Transverse colon (tissue), 4 donors: ENCODE measurements at regions of chr3 and their contacts with region 1.

Region 1: DNA sequence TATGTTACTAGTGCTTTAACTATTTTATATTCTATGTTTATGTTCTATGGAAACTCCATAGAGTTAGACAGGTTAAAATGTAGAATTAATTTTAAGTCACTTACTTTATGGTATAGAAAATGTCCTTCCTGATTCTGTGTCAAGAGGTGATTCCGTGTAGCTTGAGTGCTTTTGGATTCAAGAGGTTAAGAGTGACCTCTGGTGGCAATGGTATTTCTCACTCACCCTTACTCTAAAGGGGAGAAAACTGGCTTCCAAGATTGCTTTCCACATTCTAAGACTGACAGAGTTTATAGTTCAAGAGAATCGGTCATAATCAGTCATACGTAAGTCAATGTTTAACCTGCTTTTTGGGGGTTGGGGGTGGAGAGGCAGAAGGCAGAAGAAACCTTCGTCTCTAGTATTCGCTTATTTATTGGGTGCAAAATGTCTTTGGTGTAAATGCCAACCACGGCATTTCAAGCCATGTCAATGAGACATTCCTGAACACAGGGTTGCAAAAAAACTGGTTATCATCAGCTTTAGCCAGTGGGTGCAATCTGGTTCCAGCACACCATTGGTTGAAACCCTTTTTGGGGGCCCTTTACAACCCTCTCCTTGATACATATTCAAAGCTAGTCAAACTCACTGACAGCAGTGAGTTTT is 92.0 kb upstream of the VGLL3 start:
- DNase-seq: no peak
- H3K4me3 ChIP-seq: no peak overlapping the region
- H3K27ac ChIP-seq: no peak overlapping the region
- H3K4me1 ChIP-seq: no peaks in the 10 kb centered on the region
- H3K27me3 ChIP-seq: no peaks in the 10 kb centered on the region
- CTCF ChIP-seq: peak; percentile 18 to 48 (median 39)
- EP300 ChIP-seq: no peak
- POLR2A ChIP-seq: no peak

Region 2: GRCh38 chr3:86774082-86774691 is 308.7 kb before region 1 on chr3:
- in situ Hi-C with region 1: loop called in 3 of 4 experiments (anchors 25 kb)
- intact Hi-C with region 1: loop called (anchors 10 kb)
- DNase-seq: no peak
- H3K4me3 ChIP-seq: no peak overlapping the region
- H3K27ac ChIP-seq: no peak overlapping the region
- H3K4me1 ChIP-seq: no peaks in the 10 kb centered on the region
- H3K27me3 ChIP-seq: no peaks in the 10 kb centered on the region
- CTCF ChIP-seq: peak; percentile 31 to 47 (median 40)
- EP300 ChIP-seq: no peak
- POLR2A ChIP-seq: no peak

Region 3: DNA sequence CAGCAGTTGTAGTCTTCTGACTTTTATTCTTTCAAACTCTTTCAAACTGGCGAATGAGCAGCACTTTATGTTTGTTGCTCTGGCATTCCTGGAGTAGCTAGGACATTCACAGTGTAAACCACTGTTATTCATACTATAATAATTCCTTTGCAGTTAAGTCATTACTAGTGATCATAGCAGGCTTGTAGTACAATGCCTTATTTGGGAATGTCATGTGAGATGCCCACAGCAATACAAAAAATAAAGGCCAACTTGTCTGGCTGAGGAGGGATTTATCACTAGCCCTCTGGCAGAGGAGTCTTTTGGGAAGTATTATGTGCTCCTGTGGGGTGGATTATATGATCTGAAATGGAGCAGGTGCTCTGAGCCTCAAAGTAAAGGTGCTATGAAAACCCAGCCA is 289.1 kb before region 1 on chr3:
- in situ Hi-C with region 1: loop called in 3 of 4 experiments (anchors 25 kb)
- intact Hi-C with region 1: no loop called
- DNase-seq: no peak
- H3K4me3 ChIP-seq: no peak overlapping the region
- H3K27ac ChIP-seq: peak overlapping the region; percentile 23 to 77 (median 74)
- H3K4me1 ChIP-seq: peaks cover 0 to 10% (median 5%) of the 10 kb centered on the region in 4 donors
- H3K27me3 ChIP-seq: no peaks in the 10 kb centered on the region
- CTCF ChIP-seq: no peak
- EP300 ChIP-seq: no peak
- POLR2A ChIP-seq: no peak

Region 4: GRCh38 chr3:86969500-86970189 is 113.3 kb before region 1 on chr3:
- in situ Hi-C with region 1: loop called in 1 of 4 experiments (anchors 10 kb)
- intact Hi-C with region 1: no loop called
- DNase-seq: no peak
- H3K4me3 ChIP-seq: no peak overlapping the region
- H3K27ac ChIP-seq: no peak overlapping the region
- H3K4me1 ChIP-seq: no peaks in the 10 kb centered on the region
- H3K27me3 ChIP-seq: no peaks in the 10 kb centered on the region
- CTCF ChIP-seq: peak; percentile 37 to 61 (median 55)
- EP300 ChIP-seq: no peak
- POLR2A ChIP-seq: no peak

Region 5: DNA sequence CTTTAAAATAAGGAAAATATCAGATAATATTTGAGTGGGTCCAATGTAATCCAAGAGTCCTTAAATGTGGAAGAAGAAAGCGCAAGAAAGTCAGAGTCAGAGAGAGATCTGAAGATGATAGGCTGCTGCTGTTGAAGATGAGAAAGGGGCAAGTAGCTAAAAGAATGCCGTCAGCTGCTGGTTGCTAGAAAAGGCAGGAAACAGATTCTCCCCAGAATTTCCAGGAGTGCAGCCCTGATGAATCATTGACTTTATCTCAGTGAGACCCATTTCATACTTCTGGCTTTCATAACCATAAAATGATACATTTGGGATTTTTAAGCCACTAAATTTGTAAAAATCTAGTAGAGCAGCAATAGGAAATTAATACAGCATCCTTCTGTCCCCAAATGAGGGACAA is 136.7 kb after region 1 on chr3:
- in situ Hi-C with region 1: no loop called
- intact Hi-C with region 1: no loop called
- DNase-seq: no peak
- H3K4me3 ChIP-seq: no peak overlapping the region
- H3K27ac ChIP-seq: no peak overlapping the region
- H3K4me1 ChIP-seq: no peaks in the 10 kb centered on the region
- H3K27me3 ChIP-seq: peaks cover 13% of the 10 kb centered on the region
- CTCF ChIP-seq: no peak
- EP300 ChIP-seq: no peak
- POLR2A ChIP-seq: no peak